ENCODE measurements at regions of chr1 and their contacts with region 1.

Region 1: GRCh38 chr1:15430787-15431570 is 7.3 kb upstream of the CTRC start:
- DNase-seq: no peak
- H3K4me3 ChIP-seq: no peak overlapping the region
- H3K27ac ChIP-seq: no peak overlapping the region
- H3K4me1 ChIP-seq: peaks cover 15% of the 10 kb centered on the region
- H3K27me3 ChIP-seq: no peaks in the 10 kb centered on the region
- CTCF ChIP-seq: peak; percentile 94 to 95

Region 2: DNA sequence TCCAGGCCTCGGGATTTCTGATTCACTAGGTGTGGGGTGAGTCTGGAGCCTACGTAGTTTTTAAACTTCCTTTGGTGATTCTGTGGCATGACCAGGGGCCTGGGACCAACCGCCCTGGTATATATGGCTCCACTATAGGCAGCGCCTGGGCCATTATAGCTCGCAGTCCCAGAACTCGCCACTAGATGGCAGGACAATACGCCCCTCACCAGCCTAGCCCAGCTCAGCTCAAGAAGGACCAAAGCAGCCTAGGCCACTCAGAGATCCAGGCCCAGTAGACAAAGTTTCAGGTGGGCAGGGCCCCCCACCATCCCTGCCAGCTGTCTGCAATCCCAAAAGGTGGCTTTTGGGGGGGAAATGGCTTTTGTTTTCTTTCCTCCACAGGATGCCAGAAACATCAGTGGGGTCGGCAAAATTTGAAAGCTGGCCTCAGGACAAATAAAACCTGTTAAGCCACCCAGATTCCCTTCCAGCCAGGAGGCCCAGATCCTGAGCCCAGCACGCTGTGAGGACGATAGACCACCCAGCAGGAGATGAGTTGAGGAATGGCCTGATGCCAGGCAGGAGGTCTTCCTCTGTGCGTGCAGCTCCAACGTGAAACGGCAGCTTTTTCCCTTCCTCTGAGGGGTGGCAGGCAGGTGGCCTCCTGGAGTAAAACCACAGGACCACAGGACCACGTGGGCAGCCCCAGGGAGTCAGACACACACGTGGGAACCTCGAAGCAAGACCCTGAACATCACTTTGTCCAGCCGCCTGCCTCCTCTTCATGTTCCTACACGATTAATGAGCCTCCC is 302.3 kb before region 1 on chr1:
- CTCF ChIA-PET with region 1: no interaction called
- dilution Hi-C with region 1: no loop called
- in situ Hi-C with region 1: loop called in 1 of 2 experiments (anchors 25 kb)
- intact Hi-C with region 1: loop called (anchors 2 kb)
- DNase-seq: peak; percentile 53
- H3K4me3 ChIP-seq: no peak overlapping the region
- H3K27ac ChIP-seq: no peak overlapping the region
- H3K4me1 ChIP-seq: no peaks in the 10 kb centered on the region
- H3K27me3 ChIP-seq: no peaks in the 10 kb centered on the region
- CTCF ChIP-seq: peak; percentile 87 to 92

Region 3: DNA sequence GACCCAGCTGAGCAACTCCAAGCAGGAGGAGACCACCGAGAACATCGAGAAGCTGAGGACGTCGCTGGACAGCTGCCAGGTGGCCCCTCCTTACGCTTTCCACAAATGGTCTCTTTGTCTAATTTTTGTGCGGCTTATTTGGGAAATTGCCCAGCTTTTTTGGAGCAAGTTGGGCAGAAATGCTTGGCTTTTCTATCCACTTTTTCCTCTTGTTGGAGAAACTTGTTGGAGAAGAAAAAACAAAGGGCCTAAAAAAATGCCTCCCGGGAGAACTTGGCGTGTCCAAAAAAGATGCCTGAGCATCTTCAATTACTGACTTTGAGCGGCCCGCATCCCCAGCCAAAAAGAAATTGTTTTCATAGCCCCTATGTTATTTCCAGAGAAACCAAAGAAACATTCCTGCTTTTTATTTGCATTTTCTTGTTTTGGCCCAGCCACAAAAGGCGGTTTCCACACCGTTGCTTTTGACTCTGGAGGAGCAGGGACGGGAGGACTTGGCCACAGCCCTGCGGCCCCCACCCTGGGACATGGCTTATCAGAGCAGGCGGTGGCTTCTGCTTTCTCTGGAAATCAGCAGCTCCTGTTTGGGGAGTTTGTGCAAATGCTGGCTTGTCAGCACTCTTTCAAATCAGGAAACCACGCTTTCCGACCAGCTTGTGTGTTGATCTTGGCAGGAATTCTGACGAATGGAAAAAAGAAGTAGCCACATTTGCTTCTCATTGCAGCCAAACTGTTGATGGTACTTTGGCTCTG is 102.5 kb before region 1 on chr1:
- CTCF ChIA-PET with region 1: interaction called, 7 read pairs
- dilution Hi-C with region 1: no loop called
- in situ Hi-C with region 1: loop called (anchors 5 kb)
- intact Hi-C with region 1: loop called (anchors 1 kb)
- DNase-seq: no peak
- H3K4me3 ChIP-seq: no peak overlapping the region
- H3K27ac ChIP-seq: no peak overlapping the region
- H3K4me1 ChIP-seq: peaks cover 8% of the 10 kb centered on the region
- H3K27me3 ChIP-seq: no peaks in the 10 kb centered on the region
- CTCF ChIP-seq: no peak

Region 4: GRCh38 chr1:15345711-15346355 is 85.1 kb before region 1 on chr1:
- CTCF ChIA-PET with region 1: no interaction called
- dilution Hi-C with region 1: no loop called
- in situ Hi-C with region 1: no loop called
- intact Hi-C with region 1: no loop called
- DNase-seq: no peak
- H3K4me3 ChIP-seq: no peak overlapping the region
- H3K27ac ChIP-seq: no peak overlapping the region
- H3K4me1 ChIP-seq: peaks cover 20% of the 10 kb centered on the region
- H3K27me3 ChIP-seq: no peaks in the 10 kb centered on the region
- CTCF ChIP-seq: no peak

Region 5: GRCh38 chr1:15409388-15410222 is 21.4 kb before region 1 on chr1 and contains the start of gene EFHD2:
- CTCF ChIA-PET with region 1: interaction called, 3 read pairs
- dilution Hi-C with region 1: no loop called
- in situ Hi-C with region 1: no loop called
- intact Hi-C with region 1: loop called (anchors 2 kb)
- DNase-seq: peak; percentile 66
- H3K4me3 ChIP-seq: peak within 1 kb of the TSS; percentile 89 to 92 (median 90)
- H3K27ac ChIP-seq: peak within 1 kb of the TSS; percentile 71
- H3K4me1 ChIP-seq: peaks cover 15% of the 10 kb centered on the region
- H3K27me3 ChIP-seq: no peaks in the 10 kb centered on the region
- CTCF ChIP-seq: peak in 1 of 2 donors; percentile 2
- total RNA-seq, gene EFHD2: 17.8 to 56.2 TPM

Region 6: GRCh38 chr1:15501208-15502032 is 70.4 kb after region 1 on chr1:
- CTCF ChIA-PET with region 1: no interaction called
- dilution Hi-C with region 1: no loop called
- in situ Hi-C with region 1: no loop called
- intact Hi-C with region 1: loop called (anchors 2 kb)
- DNase-seq: peak; percentile 12
- H3K4me3 ChIP-seq: no peak overlapping the region
- H3K27ac ChIP-seq: no peak overlapping the region
- H3K4me1 ChIP-seq: no peaks in the 10 kb centered on the region
- H3K27me3 ChIP-seq: no peaks in the 10 kb centered on the region
- CTCF ChIP-seq: peak; percentile 76 to 85

Region 7: DNA sequence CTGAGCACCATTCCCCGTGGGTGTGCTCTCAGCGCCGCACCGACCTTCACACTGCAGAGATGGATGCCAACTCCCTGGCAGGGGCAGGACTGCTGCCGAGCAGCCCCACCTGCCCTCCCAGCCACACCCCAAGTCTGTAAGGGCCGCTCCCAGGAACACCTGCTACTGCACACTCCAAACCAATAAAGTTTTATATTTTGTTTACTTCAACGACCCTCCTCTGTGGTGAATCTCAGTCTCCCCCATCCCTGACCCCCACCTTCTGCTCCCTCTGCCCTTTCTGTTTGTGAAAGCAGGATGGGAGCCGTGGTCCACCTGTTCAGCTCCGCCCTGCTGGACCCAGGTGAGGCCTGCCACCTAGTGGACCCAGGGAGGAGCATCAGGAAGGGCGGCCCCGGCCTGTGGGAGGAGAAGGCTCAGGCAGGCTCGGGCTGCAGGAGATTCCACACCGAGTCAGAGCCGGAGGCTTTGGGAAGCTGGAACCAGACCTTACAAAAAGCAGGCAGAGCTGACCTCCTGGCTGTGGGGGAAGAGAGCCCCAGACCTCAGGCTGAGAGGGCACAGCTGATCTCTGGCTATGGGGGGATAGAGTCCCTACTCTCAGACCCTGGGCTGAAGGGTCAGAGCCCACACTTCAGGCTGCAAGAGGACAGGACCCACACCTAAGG is 310.3 kb after region 1 on chr1:
- CTCF ChIA-PET with region 1: no interaction called
- dilution Hi-C with region 1: loop called (anchors 25 kb)
- in situ Hi-C with region 1: no loop called
- intact Hi-C with region 1: no loop called
- DNase-seq: peak; percentile 73
- H3K4me3 ChIP-seq: no peak overlapping the region
- H3K27ac ChIP-seq: no peak overlapping the region
- H3K4me1 ChIP-seq: peaks cover 3% of the 10 kb centered on the region
- H3K27me3 ChIP-seq: no peaks in the 10 kb centered on the region
- CTCF ChIP-seq: peak; percentile 81 to 98

Measured in mammary epithelial cell (primary cell).